Natural killer cell (primary cell): ENCODE measurements at regions of chr12 and their contacts with region 1.

Region 1: DNA sequence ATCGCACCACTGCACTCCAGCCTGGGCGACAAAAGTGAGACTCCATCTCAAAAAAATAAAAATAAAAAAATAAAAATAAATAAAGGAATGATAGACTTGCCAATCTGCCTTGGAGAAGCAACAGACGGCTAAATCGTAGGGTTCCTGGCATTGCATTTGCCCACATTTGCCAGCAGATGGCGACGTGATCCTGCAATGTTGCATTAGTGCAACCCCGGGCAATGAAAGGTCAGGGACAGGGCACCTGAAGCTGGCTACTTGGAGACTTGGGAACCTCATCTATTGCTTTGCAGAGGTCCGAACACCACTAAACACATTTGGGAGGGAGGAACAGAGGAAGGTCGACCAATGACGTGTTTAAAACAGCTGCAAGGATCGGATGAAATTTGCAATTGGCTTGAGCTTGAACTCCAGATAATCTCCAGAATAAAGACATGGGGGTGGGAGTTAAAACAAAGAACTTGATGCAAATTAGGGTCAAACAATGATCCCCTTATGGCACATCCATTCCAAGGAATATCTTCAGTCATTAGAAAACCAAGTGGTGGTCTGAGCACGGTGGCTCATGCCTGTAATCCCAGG is 34.6 kb downstream of the SPRING1 start:
- DNase-seq: peak; percentile 49 to 83
- ATAC-seq: peak; percentile 72 to 86 (median 78)
- H3K4me3 ChIP-seq: no peak overlapping the region
- H3K4me3 Mint-ChIP-seq: no peak overlapping the region
- H3K27ac ChIP-seq: no peak overlapping the region
- H3K27ac Mint-ChIP-seq: no peak overlapping the region
- H3K4me1 ChIP-seq: peaks cover under 1% of the 10 kb centered on the region
- H3K4me1 Mint-ChIP-seq: peaks cover 6% of the 10 kb centered on the region in 2 donors
- H3K27me3 ChIP-seq: no peaks in the 10 kb centered on the region
- H3K27me3 Mint-ChIP-seq: peaks cover 3 to 13% of the 10 kb centered on the region in 2 donors
- CTCF ChIP-seq: peak; percentile 96

Region 2: GRCh38 chr12:116726694-116727093 is 23.4 kb after region 1 on chr12:
- intact Hi-C with region 1: no loop called
- DNase-seq: no peak
- ATAC-seq: no peak
- H3K4me3 ChIP-seq: no peak overlapping the region
- H3K4me3 Mint-ChIP-seq: no peak overlapping the region
- H3K27ac ChIP-seq: no peak overlapping the region
- H3K27ac Mint-ChIP-seq: no peak overlapping the region
- H3K4me1 ChIP-seq: no peaks in the 10 kb centered on the region
- H3K4me1 Mint-ChIP-seq: peaks cover 39 to 40% of the 10 kb centered on the region in 2 donors
- H3K27me3 ChIP-seq: no peaks in the 10 kb centered on the region
- H3K27me3 Mint-ChIP-seq: no peaks in the 10 kb centered on the region
- CTCF ChIP-seq: no peak

Region 3: GRCh38 chr12:116832353-116832752 is 129.0 kb after region 1 on chr12:
- intact Hi-C with region 1: no loop called
- DNase-seq: no peak
- ATAC-seq: no peak
- H3K4me3 ChIP-seq: no peak overlapping the region
- H3K4me3 Mint-ChIP-seq: no peak overlapping the region
- H3K27ac ChIP-seq: no peak overlapping the region
- H3K27ac Mint-ChIP-seq: no peak overlapping the region
- H3K4me1 ChIP-seq: no peaks in the 10 kb centered on the region
- H3K4me1 Mint-ChIP-seq: no peaks in the 10 kb centered on the region
- H3K27me3 ChIP-seq: no peaks in the 10 kb centered on the region
- H3K27me3 Mint-ChIP-seq: peaks cover 0 to 3% of the 10 kb centered on the region in 2 donors
- CTCF ChIP-seq: no peak

Region 4: DNA sequence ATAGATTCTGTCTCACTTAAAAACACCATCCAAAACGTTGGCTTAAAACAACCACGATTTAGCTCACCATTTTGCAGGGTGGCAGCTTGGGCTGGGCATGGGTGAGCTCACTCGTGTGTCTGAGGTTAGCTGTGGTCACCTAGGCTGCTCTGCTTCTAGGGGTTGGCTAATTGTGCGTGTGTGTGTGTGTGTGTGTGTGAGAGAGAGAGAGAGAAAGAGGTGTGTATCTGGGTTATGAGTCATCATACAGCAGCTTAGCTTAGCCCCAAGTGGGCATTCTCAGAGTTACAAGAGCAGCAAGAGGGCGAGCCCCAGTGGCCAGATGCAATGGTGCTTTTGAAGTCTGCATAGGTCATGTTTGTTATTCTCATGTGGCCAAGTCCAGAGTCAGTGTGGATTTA is 213.4 kb after region 1 on chr12:
- intact Hi-C with region 1: loop called (anchors 1 kb)
- DNase-seq: peak; percentile 69 to 74
- ATAC-seq: peak; percentile 93 to 97 (median 94)
- H3K4me3 ChIP-seq: no peak overlapping the region
- H3K4me3 Mint-ChIP-seq: peak overlapping the region; percentile 69
- H3K27ac ChIP-seq: peak overlapping the region; percentile 37
- H3K27ac Mint-ChIP-seq: peak overlapping the region; percentile 78 to 94
- H3K4me1 ChIP-seq: peaks cover 25% of the 10 kb centered on the region
- H3K4me1 Mint-ChIP-seq: peaks cover 61 to 68% of the 10 kb centered on the region in 2 donors
- H3K27me3 ChIP-seq: no peaks in the 10 kb centered on the region
- H3K27me3 Mint-ChIP-seq: peaks cover 0 to 3% of the 10 kb centered on the region in 2 donors
- CTCF ChIP-seq: peak; percentile 57

Region 5: DNA sequence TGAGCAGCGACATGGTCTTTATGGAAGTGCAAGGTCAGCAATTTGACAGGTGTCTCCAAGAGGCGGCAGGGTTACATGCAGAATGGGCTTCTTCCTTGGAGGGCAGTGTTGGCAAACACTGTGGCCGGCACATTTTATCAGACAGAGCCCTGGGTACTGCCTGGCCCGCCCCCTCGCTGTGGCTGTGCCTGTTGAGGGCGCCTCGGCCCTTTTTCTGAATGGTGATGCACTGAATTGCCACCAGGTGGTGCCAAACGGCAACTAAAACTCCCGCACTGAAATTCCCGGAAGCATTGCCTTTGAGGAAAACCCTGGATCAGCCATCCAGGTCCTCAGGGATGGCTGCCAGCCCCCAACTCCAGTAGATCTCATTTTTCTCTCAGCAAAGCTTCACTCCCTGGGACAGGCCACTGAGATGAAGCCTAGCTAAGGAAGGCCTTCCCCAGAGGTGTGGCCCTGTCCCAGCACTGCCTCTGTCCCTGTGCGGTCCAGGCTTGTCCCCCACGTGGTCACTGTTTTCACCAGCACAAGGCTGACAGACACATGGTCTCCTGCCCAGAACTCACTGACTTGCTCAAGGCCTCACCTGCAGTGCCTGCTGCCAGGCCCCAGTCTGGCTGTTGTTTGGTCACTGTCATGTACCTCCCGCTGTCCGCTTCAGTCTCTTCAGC is 322.3 kb after region 1 on chr12:
- intact Hi-C with region 1: loop called (anchors 5 kb)
- DNase-seq: peak; percentile 46 to 71
- ATAC-seq: peak; percentile 78 to 93 (median 91)
- H3K4me3 ChIP-seq: no peak overlapping the region
- H3K4me3 Mint-ChIP-seq: no peak overlapping the region
- H3K27ac ChIP-seq: no peak overlapping the region
- H3K27ac Mint-ChIP-seq: peak overlapping the region in 1 of 2 donors; percentile 18
- H3K4me1 ChIP-seq: peaks cover 8% of the 10 kb centered on the region
- H3K4me1 Mint-ChIP-seq: peaks cover 10% of the 10 kb centered on the region in 2 donors
- H3K27me3 ChIP-seq: no peaks in the 10 kb centered on the region
- H3K27me3 Mint-ChIP-seq: no peaks in the 10 kb centered on the region
- CTCF ChIP-seq: peak; percentile 93

Region 6: DNA sequence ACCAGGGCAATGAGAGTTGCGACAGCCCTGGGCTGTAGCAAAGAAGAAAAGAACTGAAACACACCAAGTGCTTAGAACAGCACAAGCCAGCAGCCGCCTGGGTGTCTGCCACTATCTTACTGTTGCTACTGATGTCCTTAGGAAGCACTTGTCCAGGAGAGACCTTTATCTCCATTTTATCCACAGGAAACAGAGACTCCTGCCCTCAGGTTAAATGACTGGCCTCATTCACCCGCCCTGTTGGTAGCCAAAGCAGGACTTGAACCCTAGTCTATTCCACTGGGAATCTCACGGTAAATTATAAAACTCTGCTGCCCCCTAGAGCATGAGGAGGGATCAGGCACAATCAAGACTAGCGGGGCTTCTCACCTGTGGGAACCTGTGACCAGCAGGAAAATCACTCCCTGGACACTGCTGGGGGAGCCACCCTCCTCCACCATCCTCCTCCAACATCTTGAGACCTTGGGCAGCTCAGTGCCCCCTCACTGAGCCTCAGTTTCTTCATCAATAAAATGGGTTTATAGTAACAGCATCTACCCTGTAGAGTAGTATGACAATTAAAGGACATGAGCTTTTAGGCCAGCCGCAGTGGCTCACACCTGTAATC is 416.4 kb after region 1 on chr12:
- intact Hi-C with region 1: loop called (anchors 1 kb)
- DNase-seq: peak in 1 of 2 donors; percentile 64
- ATAC-seq: peak in 2 of 3 donors; percentile 52 to 82
- H3K4me3 ChIP-seq: no peak overlapping the region
- H3K4me3 Mint-ChIP-seq: no peak overlapping the region
- H3K27ac ChIP-seq: no peak overlapping the region
- H3K27ac Mint-ChIP-seq: no peak overlapping the region
- H3K4me1 ChIP-seq: peaks cover 7% of the 10 kb centered on the region
- H3K4me1 Mint-ChIP-seq: peaks cover 0 to 7% of the 10 kb centered on the region in 2 donors
- H3K27me3 ChIP-seq: no peaks in the 10 kb centered on the region
- H3K27me3 Mint-ChIP-seq: no peaks in the 10 kb centered on the region
- CTCF ChIP-seq: peak; percentile 82

Region 7: GRCh38 chr12:117587631-117588287 is 884.5 kb after region 1 on chr12:
- intact Hi-C with region 1: loop called (anchors 10 kb)
- DNase-seq: peak in 1 of 2 donors; percentile 42
- ATAC-seq: peak in 2 of 3 donors; percentile 47 to 52
- H3K4me3 ChIP-seq: no peak overlapping the region
- H3K4me3 Mint-ChIP-seq: no peak overlapping the region
- H3K27ac ChIP-seq: no peak overlapping the region
- H3K27ac Mint-ChIP-seq: no peak overlapping the region
- H3K4me1 ChIP-seq: no peaks in the 10 kb centered on the region
- H3K4me1 Mint-ChIP-seq: no peaks in the 10 kb centered on the region
- H3K27me3 ChIP-seq: no peaks in the 10 kb centered on the region
- H3K27me3 Mint-ChIP-seq: peaks cover 14 to 18% of the 10 kb centered on the region in 2 donors
- CTCF ChIP-seq: peak; percentile 62